Common myeloid progenitor, CD34-positive (primary cell): ENCODE measurements at regions of chr1 and their contacts with region 1.

Region 1: GRCh38 chr1:223712194-223712849 is at the start of gene CAPN2:
- DNase-seq: peak; percentile 72 to 80 (median 76)
- H3K4me3 ChIP-seq: peak within 1 kb of the TSS; percentile 44 to 82 (median 68)
- H3K27ac ChIP-seq: peak within 1 kb of the TSS in 1 of 2 experiments; percentile 60
- H3K4me1 ChIP-seq: peaks cover 0 to 35% (median 27%) of the 10 kb centered on the region in 4 experiments
- H3K27me3 ChIP-seq: peaks cover 0 to 2% (median 0%) of the 10 kb centered on the region in 5 experiments

Region 2: DNA sequence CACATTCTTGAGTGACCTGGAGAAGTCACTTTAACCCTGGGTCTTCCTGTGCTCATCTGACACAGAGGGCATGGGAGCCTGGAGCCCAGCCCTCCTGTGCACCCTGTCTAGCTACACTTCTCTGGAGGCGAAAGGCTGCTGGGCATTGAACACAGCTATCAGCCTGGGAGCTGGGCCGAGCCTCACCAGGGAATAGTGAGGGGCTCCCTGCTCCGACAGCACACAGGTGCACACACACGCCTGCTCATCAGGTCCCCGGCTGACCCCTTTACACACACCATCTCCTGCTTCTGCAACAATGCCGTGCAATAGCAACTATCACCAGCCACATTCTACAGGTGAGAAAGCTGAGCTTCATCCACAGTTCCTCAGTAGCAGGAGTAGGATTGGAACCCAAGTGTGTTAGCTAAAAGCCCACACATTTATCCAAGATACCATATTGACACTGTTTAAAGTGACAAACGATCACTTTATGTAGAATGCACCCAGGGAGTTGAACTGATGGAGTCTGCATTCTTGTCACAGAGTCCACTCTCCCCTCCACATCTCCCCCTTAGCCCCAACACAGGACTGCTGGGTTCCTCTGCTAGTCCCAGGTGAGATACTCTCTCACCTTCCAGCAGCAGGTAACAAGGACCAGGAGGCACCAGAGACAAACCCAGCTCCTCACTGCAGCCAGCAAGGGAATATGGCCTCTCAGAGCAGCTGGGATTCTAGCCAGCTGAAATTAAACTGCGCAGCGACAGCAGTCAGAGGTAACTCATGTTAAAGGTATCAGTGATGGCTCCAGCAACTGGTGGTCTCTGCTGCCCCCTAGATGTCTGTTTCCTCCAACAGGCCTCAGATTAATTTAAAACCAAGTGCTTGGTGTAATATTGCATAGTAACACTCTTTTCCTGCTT is 28.5 kb before region 1 on chr1:
- CTCF ChIA-PET with region 1: no interaction called
- POLR2A ChIA-PET with region 1: no interaction called
- DNase-seq: peak; percentile 62 to 84 (median 74)
- H3K4me3 ChIP-seq: no peak overlapping the region
- H3K27ac ChIP-seq: no peak overlapping the region
- H3K4me1 ChIP-seq: no peaks in the 10 kb centered on the region
- H3K27me3 ChIP-seq: peaks cover 0 to 6% (median 5%) of the 10 kb centered on the region in 5 experiments

Region 3: DNA sequence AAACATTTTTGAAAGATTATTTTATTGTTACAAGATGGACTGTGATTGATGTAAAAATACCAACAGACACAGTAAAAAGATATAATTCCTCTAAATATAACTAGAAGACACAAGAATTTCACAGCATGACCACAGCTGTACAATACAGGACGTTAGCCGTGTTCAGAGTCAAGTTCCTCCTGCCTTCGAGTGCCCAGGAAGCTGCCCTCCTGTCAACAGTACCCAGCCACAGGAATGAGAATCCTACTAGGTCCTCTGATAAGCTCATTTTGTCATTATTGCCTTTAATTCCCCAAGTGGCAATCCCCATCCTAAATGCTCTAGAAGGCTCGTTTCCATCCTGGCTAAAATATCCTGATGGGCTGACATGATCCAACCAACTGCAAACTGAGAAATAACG is 16.4 kb before region 1 on chr1:
- CTCF ChIA-PET with region 1: interaction called, 10 read pairs
- POLR2A ChIA-PET with region 1: no interaction called
- DNase-seq: no peak
- H3K4me3 ChIP-seq: no peak overlapping the region
- H3K27ac ChIP-seq: no peak overlapping the region
- H3K4me1 ChIP-seq: no peaks in the 10 kb centered on the region
- H3K27me3 ChIP-seq: no peaks in the 10 kb centered on the region

Region 4: DNA sequence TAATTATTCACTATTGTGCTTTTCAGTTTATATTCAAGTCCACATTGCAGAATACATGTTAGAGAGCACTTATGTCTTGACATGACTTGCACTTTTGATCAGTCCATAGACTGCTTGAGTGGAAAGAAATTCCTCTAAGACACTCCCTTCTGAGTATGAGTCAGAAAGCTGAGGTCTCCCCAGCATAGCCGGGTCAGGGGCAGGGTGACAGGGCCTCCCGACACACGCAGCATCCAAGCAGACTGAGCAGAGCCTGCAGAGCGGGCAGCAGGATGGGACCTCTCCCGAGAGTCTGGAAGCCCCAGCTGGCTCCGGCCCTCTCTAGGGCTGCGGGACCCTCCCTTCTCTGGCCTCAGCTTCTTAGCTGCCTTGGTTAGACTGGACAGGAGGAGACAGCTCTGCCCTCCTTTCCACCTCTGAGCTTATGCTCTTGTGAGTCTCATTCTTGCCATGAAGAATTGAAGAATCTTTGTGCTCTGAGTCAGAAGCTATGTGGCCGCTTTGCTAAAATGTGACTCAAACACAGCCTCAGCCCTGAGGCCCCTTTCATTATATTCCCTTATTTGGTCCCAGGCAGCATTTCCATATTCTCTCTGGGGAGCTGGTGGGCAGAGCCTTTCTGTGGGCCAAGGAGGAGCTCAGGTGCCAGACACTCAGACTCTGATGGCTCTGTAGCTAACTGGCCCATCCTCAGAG is 11.2 kb before region 1 on chr1:
- CTCF ChIA-PET with region 1: interaction called, 10 read pairs
- POLR2A ChIA-PET with region 1: no interaction called
- DNase-seq: peak in 2 of 3 donors; percentile 42 to 52
- H3K4me3 ChIP-seq: no peak overlapping the region
- H3K27ac ChIP-seq: peak overlapping the region in 1 of 2 experiments; percentile 20
- H3K4me1 ChIP-seq: peaks cover 0 to 10% (median 5%) of the 10 kb centered on the region in 4 experiments
- H3K27me3 ChIP-seq: peaks cover 0 to 2% (median 0%) of the 10 kb centered on the region in 5 experiments

Region 5: DNA sequence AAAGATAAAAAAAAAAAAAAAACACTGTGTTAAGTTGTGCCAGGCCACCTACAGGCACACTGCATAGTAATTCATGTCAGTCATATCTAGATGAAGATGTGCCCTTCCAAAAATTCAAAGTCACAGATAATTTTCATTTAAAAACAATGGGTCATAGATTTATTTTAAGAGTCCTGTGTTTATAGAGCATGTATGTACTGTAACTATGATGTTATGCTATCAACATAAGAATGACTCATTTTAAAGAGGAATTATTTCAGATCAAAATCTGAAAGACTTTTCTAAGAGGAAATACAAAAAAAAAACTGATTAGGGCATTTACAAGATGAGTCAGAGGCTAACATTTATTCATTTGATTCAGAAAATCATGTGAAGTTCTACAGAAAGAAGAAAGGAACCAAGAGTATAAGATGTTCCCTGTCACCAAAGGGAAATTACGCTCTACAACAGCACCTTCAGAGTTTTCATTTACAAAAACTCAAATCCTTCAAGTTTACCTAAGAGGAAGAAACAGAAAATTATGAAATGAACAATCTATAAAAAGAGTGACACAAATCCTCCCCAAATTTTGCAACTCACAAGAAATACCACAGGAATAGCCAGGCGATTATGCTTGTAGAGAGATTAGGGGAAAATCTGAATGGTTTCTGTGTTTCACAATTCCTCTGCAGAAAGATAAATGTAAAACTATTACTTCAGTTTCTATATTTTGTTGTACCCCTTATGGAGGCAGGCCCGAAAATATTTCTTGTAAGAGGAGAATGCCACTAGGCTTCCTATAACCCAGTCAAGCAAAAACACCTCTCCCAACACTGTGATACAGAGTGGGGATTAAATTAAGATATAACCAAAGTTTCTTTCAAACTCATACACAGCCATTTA is 119.7 kb after region 1 on chr1:
- CTCF ChIA-PET with region 1: no interaction called
- POLR2A ChIA-PET with region 1: no interaction called
- DNase-seq: peak; percentile 33 to 84 (median 69)
- H3K4me3 ChIP-seq: peak overlapping the region in 1 of 7 experiments; percentile 10
- H3K27ac ChIP-seq: peak overlapping the region; percentile 51 to 84
- H3K4me1 ChIP-seq: peaks cover 9 to 54% (median 25%) of the 10 kb centered on the region in 4 experiments
- H3K27me3 ChIP-seq: no peaks in the 10 kb centered on the region

Region 6: DNA sequence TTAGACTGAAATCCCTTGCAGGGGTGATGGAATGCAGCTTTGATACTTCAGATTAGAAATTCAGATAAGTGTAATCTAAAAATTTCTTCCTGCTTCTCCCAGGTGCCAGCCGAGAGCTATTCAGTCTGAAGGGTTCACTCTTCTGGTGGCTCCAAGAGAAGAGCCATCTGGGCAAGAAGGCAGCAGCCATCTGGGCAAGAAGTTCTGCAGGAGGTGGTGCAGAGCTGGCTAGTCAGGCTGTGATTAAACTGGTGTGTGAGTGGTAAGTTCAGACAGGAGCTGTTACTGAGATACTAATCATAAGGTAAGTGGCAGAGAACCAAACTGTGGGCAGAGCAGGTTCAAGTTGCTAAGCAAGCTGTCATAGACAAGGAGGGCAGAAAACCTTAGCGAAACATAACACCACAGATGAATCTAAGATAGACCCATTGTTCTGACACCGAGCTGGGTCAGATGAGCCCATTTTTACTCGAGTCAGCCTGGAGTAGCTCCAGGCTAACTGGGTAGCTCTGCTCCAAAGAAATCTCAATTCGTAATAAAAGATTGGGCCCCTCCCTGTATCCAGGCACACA is 147.8 kb after region 1 on chr1:
- CTCF ChIA-PET with region 1: no interaction called
- POLR2A ChIA-PET with region 1: no interaction called
- DNase-seq: no peak
- H3K4me3 ChIP-seq: no peak overlapping the region
- H3K27ac ChIP-seq: no peak overlapping the region
- H3K4me1 ChIP-seq: no peaks in the 10 kb centered on the region
- H3K27me3 ChIP-seq: peaks cover 0 to 3% (median 0%) of the 10 kb centered on the region in 5 experiments